ENCODE measurements at regions of chr5 and their contacts with region 1.

Region 1: DNA sequence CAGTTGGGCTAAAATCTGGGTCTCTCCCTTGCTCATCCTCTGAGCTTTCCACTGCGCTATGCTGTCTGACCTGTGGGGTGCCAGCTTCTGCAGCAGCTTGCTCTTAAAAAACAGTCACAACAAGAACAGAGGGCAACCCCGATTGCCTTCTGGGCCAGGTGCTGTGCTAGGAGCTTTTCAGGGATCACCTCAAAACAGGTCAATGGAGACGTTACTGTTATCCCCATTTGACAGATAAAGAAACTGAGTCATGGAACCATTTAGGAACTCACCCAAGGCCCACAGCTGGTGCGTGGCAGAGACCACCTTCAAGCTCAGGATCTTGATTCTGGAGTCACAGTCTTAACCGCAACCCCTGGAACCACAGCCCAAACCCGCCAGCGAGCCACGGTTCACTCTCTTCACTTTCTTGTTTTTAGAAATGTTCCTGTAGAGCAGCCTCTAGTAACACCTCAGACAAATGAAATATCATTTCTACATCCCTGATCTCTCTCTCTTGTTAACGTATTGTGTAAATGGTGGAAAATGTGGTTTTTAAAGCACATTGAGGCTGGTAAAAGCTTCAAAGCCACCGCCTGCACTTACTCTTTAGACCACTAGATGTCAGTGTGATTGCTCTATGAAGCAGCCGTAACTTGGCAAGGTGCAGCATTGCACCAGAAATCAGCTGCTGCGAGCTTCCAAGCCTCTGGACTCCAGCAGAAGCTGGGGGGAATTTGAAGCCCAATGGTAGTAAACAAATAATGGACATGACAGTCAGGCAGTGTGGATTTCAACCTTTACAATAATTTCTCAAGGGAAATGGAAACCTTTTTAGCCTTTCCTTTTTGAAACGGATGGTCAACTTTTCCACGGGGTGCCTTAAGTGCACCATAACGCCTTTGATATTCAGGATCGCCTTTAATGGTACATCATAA is 1.7 kb downstream of the FYB1 start:
- DNase-seq: peak; percentile 90
- ATAC-seq: peak; percentile 71
- H3K4me3 Mint-ChIP-seq: peak overlapping the region; percentile 81
- H3K27ac Mint-ChIP-seq: peak overlapping the region; percentile 95
- H3K4me1 Mint-ChIP-seq: peaks cover 62% of the 10 kb centered on the region
- H3K27me3 Mint-ChIP-seq: no peaks in the 10 kb centered on the region
- CTCF ChIP-seq: peak; percentile 91

Region 2: DNA sequence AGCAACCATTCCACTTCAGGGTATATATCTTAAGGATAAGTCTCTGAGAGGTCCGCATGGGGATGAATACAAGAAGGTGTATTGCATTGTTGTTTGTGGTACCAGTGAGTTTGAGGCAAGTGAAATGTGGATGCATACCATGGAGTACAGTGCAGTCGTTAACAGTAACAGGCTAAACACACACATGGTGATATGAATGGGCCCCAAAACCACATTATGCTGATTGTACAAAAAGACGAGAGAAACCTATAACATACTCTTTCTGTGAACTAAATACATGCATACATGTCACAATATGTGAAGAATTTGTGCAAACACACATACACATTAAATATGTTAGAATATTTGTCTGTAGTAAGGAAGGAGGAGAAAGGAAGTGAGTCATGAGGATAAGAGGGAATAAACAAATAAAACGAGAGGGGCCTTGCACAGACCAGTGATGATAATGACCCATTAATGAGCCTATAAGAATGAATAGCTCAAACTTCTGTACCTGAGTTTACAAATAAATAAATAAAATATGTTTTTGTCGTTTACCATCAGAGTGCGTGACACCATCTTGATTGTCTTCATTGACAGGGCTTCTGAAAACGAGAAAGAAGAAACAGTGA is 77.0 kb before region 1 on chr5:
- CTCF ChIA-PET with region 1: interaction called, 12 read pairs
- POLR2A ChIA-PET with region 1: interaction called, 4 read pairs
- intact Hi-C with region 1: no loop called
- DNase-seq: no peak
- ATAC-seq: no peak
- H3K4me3 Mint-ChIP-seq: no peak overlapping the region
- H3K27ac Mint-ChIP-seq: no peak overlapping the region
- H3K4me1 Mint-ChIP-seq: peaks cover 42% of the 10 kb centered on the region
- H3K27me3 Mint-ChIP-seq: no peaks in the 10 kb centered on the region
- CTCF ChIP-seq: no peak

Region 3: GRCh38 chr5:39164529-39165402 is 52.9 kb before region 1 on chr5:
- CTCF ChIA-PET with region 1: interaction called, 23 read pairs
- POLR2A ChIA-PET with region 1: interaction called, 7 read pairs
- intact Hi-C with region 1: no loop called
- DNase-seq: no peak
- ATAC-seq: peak; percentile 89
- H3K4me3 Mint-ChIP-seq: peak overlapping the region; percentile 67
- H3K27ac Mint-ChIP-seq: peak overlapping the region; percentile 96
- H3K4me1 Mint-ChIP-seq: peaks cover 89% of the 10 kb centered on the region
- H3K27me3 Mint-ChIP-seq: no peaks in the 10 kb centered on the region
- CTCF ChIP-seq: no peak

Region 4: DNA sequence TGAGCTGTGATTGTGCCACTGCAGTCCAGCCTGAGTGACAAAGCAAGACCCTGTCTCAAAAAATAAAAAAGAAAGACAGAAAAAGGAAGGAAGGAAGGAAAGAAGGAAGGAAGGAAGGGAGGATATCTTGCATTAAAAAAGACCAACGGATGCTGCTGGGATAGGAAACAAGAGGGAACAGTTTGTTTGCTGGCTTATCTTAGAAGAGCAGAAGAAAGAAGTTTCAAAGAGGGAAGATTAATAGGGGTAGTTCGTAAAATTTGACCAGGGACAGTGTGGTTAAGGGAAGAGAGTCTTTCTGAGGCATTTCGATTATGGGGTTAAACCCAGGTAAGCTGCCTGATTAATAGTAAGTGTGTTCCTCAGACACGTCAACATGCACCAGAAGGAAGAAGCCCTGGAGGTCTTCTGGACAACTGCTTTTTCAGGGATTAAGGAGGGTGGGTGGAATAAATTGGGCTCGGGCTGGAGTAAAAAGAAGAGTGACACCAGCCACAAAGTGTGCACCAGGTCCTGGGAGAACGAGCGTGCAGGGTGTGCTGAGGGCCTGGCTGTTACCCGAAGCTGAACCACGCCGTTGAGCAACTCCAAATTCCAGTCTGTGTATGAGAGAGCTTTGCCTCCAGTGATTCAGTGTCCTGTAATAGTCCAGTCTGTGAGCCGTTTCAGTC is 23.0 kb before region 1 on chr5:
- CTCF ChIA-PET with region 1: interaction called, 43 read pairs
- POLR2A ChIA-PET with region 1: interaction called, 43 read pairs
- intact Hi-C with region 1: no loop called
- DNase-seq: no peak
- ATAC-seq: peak; percentile 19
- H3K4me3 Mint-ChIP-seq: peak overlapping the region; percentile 66
- H3K27ac Mint-ChIP-seq: peak overlapping the region; percentile 89
- H3K4me1 Mint-ChIP-seq: peaks cover 69% of the 10 kb centered on the region
- H3K27me3 Mint-ChIP-seq: no peaks in the 10 kb centered on the region
- CTCF ChIP-seq: no peak

Region 5: DNA sequence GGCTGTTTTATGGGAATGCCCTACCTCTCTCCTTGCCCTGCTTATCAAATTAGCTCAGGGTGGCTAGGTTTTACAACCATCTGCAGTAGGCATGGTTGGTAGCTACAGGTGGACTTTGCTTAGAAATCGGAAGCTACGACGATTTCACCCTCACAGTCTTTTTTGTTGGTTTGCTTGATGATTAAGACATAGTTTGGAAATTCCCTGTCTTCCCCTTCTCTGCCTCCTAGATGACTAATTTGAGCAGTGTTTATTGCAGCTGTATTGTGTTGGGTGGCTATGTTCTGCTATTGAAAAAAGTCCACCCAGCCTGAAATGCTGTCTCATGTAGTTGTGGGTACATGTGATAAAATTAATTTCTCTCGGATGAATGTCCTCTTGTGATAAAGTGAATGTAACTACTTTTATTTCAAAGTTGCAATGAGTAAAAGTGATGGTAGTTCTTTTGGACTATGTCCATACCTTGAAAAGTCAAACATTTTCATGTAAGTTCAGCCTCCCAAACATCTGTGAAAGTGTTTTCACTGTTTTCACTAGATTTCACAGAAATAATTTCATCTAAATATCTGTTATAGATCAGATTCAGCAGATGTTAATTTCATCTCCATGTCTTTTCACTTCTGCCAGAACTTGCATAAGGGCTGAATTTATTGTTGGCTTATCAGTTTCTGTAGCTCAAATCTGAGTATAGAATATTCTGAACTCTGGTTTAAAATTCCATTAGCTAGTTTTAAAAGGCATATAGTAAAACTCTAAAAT is 39.0 kb after region 1 on chr5:
- CTCF ChIA-PET with region 1: interaction called, 29 read pairs
- POLR2A ChIA-PET with region 1: no interaction called
- intact Hi-C with region 1: loop called (anchors 1 kb)
- DNase-seq: peak; percentile 17
- ATAC-seq: peak; percentile 92
- H3K4me3 Mint-ChIP-seq: peak overlapping the region; percentile 38
- H3K27ac Mint-ChIP-seq: peak overlapping the region; percentile 78
- H3K4me1 Mint-ChIP-seq: peaks cover 21% of the 10 kb centered on the region
- H3K27me3 Mint-ChIP-seq: no peaks in the 10 kb centered on the region
- CTCF ChIP-seq: no peak

Region 6: DNA sequence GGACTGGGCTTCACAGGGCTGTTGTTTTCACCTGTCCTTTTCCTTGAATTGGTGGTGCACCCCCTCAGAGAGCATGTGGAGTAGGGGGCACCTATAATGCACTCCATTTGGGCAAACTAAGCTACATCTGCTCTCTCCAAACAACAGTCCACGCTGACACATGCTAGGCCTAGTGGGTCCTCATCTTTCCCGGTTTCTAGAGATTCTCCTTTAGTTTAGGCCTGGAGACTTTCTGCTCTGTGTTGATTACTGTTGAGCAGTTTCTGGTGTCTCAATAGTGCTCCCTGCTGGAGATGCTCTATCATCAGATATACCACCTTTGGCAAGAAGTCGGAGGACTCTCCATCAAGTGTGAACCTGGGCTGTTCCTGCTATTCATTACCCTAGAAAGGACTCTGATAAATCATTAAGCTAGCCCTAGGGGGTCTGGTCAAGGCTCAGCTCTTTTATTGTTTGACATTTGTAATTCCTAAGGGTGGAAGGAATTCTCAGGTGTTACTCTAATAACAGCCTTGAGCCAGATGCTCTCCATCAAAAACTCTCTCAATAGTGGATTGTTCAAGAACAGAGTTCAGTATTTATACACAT is 65.7 kb after region 1 on chr5:
- CTCF ChIA-PET with region 1: interaction called, 317 read pairs
- POLR2A ChIA-PET with region 1: interaction called, 15 read pairs
- intact Hi-C with region 1: loop called (anchors 1 kb)
- DNase-seq: peak; percentile 70
- ATAC-seq: peak; percentile 99
- H3K4me3 Mint-ChIP-seq: no peak overlapping the region
- H3K27ac Mint-ChIP-seq: peak overlapping the region; percentile 73
- H3K4me1 Mint-ChIP-seq: peaks cover 29% of the 10 kb centered on the region
- H3K27me3 Mint-ChIP-seq: peaks cover 5% of the 10 kb centered on the region
- CTCF ChIP-seq: peak; percentile 78

Region 7: GRCh38 chr5:39328731-39329130 is 111.1 kb after region 1 on chr5:
- CTCF ChIA-PET with region 1: no interaction called
- POLR2A ChIA-PET with region 1: no interaction called
- intact Hi-C with region 1: no loop called
- DNase-seq: no peak
- ATAC-seq: no peak
- H3K4me3 Mint-ChIP-seq: no peak overlapping the region
- H3K27ac Mint-ChIP-seq: no peak overlapping the region
- H3K4me1 Mint-ChIP-seq: no peaks in the 10 kb centered on the region
- H3K27me3 Mint-ChIP-seq: no peaks in the 10 kb centered on the region
- CTCF ChIP-seq: no peak

Region 8: DNA sequence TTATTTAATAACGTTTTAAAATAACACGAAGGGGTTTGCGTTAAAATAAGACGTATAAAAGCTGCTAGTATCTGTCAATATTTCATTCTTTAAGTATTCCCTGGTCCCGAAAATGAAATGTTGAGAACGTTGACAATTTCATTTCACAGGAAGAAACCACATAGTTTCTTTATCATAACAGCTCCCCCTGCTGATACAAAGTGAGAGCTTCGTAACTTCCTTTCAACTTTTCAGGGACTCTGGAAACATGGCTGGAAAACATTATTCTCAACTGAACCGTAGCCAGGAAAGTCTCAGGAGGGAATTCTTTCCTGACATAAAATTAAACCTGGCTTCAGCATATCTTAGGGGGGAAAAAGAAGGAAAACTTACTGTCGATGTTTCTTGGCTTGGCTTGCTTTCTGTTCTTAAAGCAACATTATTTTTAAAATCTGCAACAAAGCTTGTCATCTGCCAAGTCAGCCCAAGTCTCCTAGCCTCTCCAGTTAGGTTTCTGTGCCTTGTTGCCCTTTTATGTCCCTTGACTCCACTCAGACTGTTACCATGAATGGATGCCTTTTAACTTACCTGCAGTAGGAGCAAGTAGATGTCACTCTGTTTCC is 330.0 kb after region 1 on chr5:
- CTCF ChIA-PET with region 1: interaction called, 22 read pairs
- POLR2A ChIA-PET with region 1: no interaction called
- intact Hi-C with region 1: loop called (anchors 10 kb)
- DNase-seq: peak; percentile 6
- ATAC-seq: no peak
- H3K4me3 Mint-ChIP-seq: no peak overlapping the region
- H3K27ac Mint-ChIP-seq: no peak overlapping the region
- H3K4me1 Mint-ChIP-seq: no peaks in the 10 kb centered on the region
- H3K27me3 Mint-ChIP-seq: peaks cover 3% of the 10 kb centered on the region
- CTCF ChIP-seq: peak; percentile 70

Region 9: DNA sequence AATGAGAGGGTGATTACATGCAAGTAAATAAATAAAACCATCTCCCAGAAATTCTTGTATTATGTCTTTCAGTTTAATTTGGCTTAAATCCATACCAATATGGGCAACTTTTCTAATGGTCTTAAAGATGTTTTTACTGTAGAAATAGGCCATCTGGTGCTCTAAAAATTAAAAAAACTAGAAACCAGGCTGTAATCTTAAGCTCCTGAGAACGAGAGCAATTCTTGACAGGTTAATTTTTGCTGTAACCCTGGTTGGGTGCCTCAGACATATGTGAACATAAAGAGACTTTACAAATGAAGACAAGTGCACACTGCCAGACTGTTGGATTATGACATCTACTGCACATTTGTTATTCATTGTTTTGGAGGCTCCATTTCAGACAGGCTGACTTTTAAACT is 453.9 kb after region 1 on chr5:
- CTCF ChIA-PET with region 1: no interaction called
- POLR2A ChIA-PET with region 1: no interaction called
- intact Hi-C with region 1: no loop called
- DNase-seq: no peak
- ATAC-seq: no peak
- H3K4me3 Mint-ChIP-seq: no peak overlapping the region
- H3K27ac Mint-ChIP-seq: no peak overlapping the region
- H3K4me1 Mint-ChIP-seq: no peaks in the 10 kb centered on the region
- H3K27me3 Mint-ChIP-seq: peaks cover 4% of the 10 kb centered on the region
- CTCF ChIP-seq: no peak